Sigmoid colon (tissue), 7 donors: ENCODE measurements at regions of chr3 and their contacts with region 1.

Region 1: GRCh38 chr3:42443819-42444436 is 33.5 kb upstream of the LYZL4 start:
- DNase-seq: peak; percentile 82
- H3K4me3 ChIP-seq: no peak overlapping the region
- H3K27ac ChIP-seq: no peak overlapping the region
- H3K4me1 ChIP-seq: no peaks in the 10 kb centered on the region
- H3K27me3 ChIP-seq: no peaks in the 10 kb centered on the region
- CTCF ChIP-seq: peak; percentile 91 to 97 (median 92)
- EP300 ChIP-seq: no peak
- POLR2A ChIP-seq: no peak

Region 2: GRCh38 chr3:41987627-41988026 is 456.3 kb before region 1 on chr3:
- intact Hi-C with region 1: no loop called
- DNase-seq: no peak
- H3K4me3 ChIP-seq: no peak overlapping the region
- H3K27ac ChIP-seq: no peak overlapping the region
- H3K4me1 ChIP-seq: no peaks in the 10 kb centered on the region
- H3K27me3 ChIP-seq: no peaks in the 10 kb centered on the region
- CTCF ChIP-seq: no peak
- EP300 ChIP-seq: no peak
- POLR2A ChIP-seq: no peak

Region 3: DNA sequence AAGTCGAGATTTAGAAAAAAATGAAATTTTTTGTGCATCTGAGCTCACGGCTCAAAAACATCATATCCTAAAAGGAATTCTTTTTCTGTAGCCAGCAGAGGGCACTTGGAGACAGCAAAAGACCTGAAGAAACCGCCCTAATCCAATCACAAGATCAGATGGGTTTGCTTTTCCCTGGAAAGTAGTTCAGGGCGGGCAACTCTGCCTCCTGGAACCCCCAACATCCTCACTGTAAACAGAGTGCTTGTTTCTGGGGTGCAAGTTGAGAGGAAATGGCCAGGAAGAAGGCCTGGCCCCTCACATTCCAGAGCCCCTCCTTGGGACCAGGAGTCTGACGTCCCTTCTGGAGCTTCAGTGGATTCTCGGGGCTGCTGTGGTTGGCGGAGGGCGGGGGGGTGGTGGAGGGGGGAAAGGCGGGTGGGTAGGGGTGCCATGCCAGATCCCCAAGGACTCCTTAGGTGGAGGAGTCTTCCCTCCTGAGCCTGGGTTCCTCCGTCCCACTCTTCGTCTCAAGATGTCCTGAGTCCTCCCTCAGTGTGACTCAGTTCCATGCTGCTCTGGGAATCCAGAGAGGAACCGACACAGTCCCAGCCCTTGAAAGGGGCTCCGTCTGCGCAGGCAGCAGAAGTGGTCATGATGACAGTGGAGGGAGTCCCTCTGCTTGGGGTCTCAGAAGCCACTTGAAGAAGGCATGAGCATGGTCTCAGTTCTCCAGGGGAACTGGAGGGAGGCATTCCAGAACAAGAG is 213.8 kb before region 1 on chr3:
- intact Hi-C with region 1: loop called (anchors 5 kb)
- DNase-seq: no peak
- H3K4me3 ChIP-seq: peak overlapping the region in 2 of 4 donors; percentile 11 to 19
- H3K27ac ChIP-seq: no peak overlapping the region
- H3K4me1 ChIP-seq: peaks cover 0 to 10% (median 3%) of the 10 kb centered on the region in 4 donors
- H3K27me3 ChIP-seq: no peaks in the 10 kb centered on the region
- CTCF ChIP-seq: peak; percentile 10 to 46 (median 38)
- EP300 ChIP-seq: no peak
- POLR2A ChIP-seq: no peak

Region 4: GRCh38 chr3:42247576-42248027 is 196.3 kb before region 1 on chr3:
- intact Hi-C with region 1: loop called (anchors 2 kb)
- DNase-seq: no peak
- H3K4me3 ChIP-seq: no peak overlapping the region
- H3K27ac ChIP-seq: no peak overlapping the region
- H3K4me1 ChIP-seq: no peaks in the 10 kb centered on the region
- H3K27me3 ChIP-seq: no peaks in the 10 kb centered on the region
- CTCF ChIP-seq: peak in 3 of 4 experiments; percentile 41 to 58 (median 58)
- EP300 ChIP-seq: no peak
- POLR2A ChIP-seq: no peak

Region 5: DNA sequence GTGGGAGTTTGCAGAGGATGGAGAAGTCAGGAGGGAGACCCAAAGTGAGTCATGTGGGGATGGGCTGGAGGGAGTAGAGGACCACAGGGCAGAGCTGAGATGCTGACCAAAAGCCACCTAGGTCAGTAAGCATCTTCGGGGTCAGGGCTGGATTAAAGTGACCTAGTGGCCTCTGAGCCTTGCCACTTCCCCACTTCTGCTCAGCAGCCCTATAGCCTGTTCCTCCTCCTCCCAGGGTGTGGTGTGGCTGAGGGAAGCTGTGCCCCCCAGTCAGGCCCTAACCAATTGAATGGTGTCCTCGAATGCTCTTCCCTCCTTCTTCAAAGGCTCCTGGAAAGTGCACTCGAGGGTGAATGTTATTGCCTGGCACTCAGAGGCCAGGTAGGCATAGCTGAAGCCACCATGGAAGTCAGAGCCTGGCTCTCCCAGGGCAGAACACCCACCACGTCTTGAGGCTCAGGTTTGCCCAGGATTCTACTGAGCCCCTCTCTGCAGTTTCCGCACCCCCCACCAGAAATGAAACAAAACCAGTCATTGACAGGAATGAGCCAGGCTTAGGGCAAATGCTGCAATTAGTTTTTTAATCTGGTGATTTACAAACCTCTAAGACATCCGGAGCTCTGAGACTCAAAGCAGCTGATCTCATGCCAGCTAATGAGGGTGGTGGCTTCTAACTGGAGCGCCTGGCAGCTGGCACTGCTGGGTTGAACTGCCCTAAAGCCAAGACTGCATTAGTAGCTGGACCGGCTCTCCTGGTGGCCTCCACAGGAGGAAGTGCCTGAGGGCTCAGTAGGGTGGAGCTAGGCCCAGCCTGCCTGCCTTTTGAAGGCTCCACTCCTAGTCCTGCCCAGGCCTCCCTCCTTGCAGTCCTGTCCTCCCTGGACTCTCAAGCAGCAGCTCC is 32.5 kb after region 1 on chr3:
- intact Hi-C with region 1: no loop called
- DNase-seq: no peak
- H3K4me3 ChIP-seq: no peak overlapping the region
- H3K27ac ChIP-seq: no peak overlapping the region
- H3K4me1 ChIP-seq: no peaks in the 10 kb centered on the region
- H3K27me3 ChIP-seq: no peaks in the 10 kb centered on the region
- CTCF ChIP-seq: no peak
- EP300 ChIP-seq: no peak
- POLR2A ChIP-seq: no peak

Region 6: DNA sequence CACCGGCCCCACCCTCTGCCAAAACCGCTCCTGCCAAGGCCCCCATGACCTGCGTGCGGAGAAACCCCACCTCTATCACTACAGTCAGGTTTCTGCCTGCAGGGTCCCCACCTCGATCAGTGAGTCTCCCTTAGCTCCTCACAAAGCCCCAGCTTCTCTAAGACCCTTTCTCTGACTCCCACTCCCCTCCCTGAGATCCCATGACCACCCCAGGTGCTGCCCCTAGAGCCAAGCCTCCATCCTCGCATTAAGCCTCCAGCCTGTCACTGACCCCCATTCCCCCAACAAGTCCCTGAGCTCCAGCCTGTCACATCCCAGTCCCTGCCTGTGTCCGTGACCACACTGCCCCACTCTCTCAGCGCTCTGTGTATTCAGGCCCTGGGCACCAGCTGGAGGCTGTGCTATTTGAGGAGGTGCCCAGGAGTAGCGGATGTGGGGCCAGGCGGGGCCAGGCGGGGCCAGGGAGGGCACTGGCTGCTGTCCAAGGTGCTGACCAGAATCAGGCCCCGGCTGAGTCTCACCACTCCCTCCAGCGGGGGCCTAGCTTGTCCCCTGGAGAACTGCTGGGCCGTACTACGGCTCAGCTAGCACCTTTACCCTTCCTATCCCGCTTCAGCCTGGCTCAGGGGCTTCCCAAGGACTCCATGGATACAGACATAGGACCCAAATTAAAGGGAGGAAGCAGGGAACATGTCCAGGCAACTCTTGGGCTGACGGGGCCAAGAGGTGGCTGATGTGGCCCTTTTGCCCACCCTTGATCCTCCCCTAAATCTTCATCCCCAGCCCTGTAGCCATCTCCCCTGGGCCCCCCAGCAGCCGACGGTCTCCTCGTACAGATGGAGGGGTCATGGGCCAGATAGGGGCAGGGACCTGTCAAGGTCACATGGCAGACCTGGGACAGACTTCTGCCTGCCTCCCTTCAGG is 257.5 kb after region 1 on chr3:
- intact Hi-C with region 1: no loop called
- DNase-seq: no peak
- H3K4me3 ChIP-seq: no peak overlapping the region
- H3K27ac ChIP-seq: no peak overlapping the region
- H3K4me1 ChIP-seq: no peaks in the 10 kb centered on the region
- H3K27me3 ChIP-seq: no peaks in the 10 kb centered on the region
- CTCF ChIP-seq: no peak
- EP300 ChIP-seq: no peak
- POLR2A ChIP-seq: no peak

Region 7: GRCh38 chr3:42780892-42781700 is 337.2 kb after region 1 on chr3:
- intact Hi-C with region 1: no loop called
- DNase-seq: no peak
- H3K4me3 ChIP-seq: no peak overlapping the region
- H3K27ac ChIP-seq: peak overlapping the region in 3 of 4 donors; percentile 37 to 70 (median 45)
- H3K4me1 ChIP-seq: peaks cover 0 to 16% (median 0%) of the 10 kb centered on the region in 4 donors
- H3K27me3 ChIP-seq: no peaks in the 10 kb centered on the region
- CTCF ChIP-seq: peak; percentile 47 to 81 (median 78)
- EP300 ChIP-seq: no peak
- POLR2A ChIP-seq: no peak